BJ (cell line): ENCODE measurements at regions of chr11 and their contacts with region 1.

Region 1: GRCh38 chr11:19577976-19578619 is 134.5 kb upstream of the NAV2 start:
- DNase-seq: peak; percentile 85
- H3K4me3 ChIP-seq: no peak overlapping the region
- H3K27me3 ChIP-seq: no peaks in the 10 kb centered on the region
- CTCF ChIP-seq: 0 out of 2 replicates have a peak, but pooled peaks have one; percentile 5

Region 2: DNA sequence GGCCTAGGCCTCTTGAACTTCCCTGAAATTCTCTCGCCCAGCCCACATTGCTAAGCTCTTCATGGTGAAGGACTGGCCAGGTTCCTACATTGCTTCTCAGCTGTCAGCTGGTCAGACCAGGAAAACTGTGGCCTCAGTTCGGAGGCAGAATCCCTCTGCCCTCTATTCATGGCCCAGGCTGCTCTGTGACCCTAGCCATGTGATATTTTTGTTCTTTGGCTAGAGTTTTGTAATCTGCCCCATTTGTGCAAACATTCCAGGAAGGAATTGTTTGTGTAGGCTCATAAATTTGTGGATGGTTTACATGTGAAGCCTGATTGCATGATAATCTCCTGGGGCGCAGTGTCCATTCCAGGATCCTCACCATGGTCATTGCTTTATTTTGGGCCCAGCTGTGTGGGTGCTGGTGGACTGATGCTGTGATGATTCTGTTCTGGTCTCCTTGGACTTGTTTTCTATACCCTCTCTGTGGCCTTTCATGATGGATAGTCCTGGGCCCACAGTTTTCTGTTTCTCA is 188.3 kb before region 1 on chr11:
- CTCF ChIA-PET with region 1: no interaction called
- POLR2A ChIA-PET with region 1: no interaction called
- DNase-seq: no peak
- H3K4me3 ChIP-seq: no peak overlapping the region
- H3K27me3 ChIP-seq: peaks cover 1% of the 10 kb centered on the region; the same call in 1 of the 2 replicates
- CTCF ChIP-seq: no peak

Region 3: DNA sequence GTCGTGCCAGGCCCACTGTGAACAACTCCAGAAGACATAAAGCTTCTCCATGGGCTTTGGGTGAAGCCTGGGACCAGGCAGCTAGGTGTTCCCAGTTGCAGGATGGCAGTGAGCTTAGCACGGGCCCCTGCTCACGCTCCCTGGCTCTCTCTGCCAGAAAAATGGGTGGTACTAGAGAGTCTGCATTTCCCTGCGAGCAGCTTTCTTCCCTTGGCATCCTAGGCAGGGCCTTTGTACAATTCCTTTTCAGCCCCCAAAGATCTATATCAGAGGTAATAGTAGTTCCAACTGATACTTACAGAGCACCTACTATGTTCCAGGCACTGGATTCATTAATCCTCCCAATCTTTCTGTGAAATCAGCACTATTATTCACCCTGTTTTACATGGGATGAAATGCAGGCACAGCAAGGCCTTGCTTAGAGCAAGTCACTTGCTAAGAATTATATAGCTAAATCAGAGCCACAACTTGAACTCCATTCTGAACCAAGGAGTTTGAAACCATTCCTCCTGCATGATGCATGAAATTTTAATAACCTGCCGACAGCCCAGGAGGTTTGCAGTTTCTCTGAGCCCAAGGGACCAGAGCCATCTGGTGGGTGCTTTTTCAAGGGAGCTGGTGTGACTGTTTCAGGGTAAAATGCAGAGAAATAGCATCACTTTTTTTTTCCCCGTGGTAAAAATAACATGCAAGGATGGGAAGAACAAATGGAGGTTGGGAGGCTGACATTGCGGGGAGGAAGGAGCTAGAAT is 157.2 kb after region 1 on chr11:
- CTCF ChIA-PET with region 1: interaction called, 5 read pairs
- POLR2A ChIA-PET with region 1: interaction called, 16 read pairs
- DNase-seq: peak; percentile 36
- H3K4me3 ChIP-seq: no peak overlapping the region
- H3K27me3 ChIP-seq: no peaks in the 10 kb centered on the region
- CTCF ChIP-seq: peak; percentile 66

Region 4: DNA sequence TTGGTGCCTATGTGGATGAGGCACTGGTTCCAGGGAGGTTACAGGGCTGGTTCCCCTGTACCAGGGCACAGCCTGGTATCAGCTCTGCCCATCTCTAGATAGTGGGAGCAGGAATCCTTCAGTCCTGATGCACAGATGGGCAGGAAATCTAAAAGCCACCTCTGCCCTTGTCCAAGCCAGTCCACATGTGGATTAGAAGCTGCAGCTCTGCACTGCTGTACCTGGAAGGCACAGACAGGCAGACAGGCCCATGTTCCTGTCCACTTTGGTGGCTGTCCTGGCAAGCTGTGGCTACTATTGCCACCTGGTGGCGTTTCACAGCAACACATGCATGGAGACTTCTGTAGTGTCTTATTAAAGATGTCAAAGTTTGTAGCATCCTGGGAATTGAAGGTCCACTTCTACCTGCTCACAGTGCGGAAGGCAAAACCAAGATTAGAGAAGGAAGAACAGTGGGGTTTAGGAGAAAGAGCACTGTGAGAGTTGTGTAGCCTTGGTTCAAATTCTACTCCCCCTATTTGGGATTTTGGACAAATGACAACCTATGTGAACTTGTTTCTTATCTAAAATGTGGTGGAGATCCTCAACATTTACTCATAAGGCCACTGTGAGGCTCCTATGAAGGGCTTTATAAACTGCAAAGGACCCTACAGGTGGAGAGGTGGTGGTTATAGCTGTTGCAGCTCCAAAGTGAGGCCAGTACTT is 164.6 kb after region 1 on chr11:
- CTCF ChIA-PET with region 1: interaction called, 35 read pairs
- POLR2A ChIA-PET with region 1: no interaction called
- DNase-seq: no peak
- H3K4me3 ChIP-seq: no peak overlapping the region
- H3K27me3 ChIP-seq: no peaks in the 10 kb centered on the region
- CTCF ChIP-seq: peak; percentile 84